GM10248 (cell line): ENCODE measurements at regions of chr5 and their contacts with region 1.

Region 1: GRCh38 chr5:136212252-136212721 is 19.3 kb upstream of the SMIM32 start:
- DNase-seq: peak; percentile 82
- CTCF ChIP-seq: peak; percentile 86

Region 2: DNA sequence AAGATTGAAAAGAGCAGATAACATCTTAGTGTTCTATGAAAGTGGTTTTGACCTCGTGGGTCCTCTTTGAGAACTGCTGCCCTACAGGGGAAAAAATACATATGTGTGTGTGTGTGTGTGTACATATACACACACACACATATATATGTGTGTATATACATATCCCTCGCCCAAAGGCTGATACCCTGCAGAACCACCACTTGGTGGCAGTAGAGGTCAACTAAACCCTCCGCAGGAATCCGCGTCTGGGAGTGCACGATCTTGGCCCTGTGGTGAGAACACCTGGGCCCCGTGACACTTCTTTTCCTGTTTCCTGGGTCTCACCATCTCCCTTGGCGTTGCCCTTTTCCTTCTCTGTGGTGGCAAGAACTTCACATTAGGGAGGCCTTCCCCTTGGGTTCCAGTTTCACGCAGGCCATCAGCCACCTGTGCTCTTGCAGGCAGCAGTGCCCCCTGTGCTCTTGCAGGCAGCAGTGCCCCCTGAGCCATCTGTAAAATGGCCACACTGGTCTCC is 324.9 kb before region 1 on chr5:
- CTCF ChIA-PET with region 1: interaction called, 50 read pairs
- POLR2A ChIA-PET with region 1: no interaction called
- DNase-seq: peak; percentile 72
- CTCF ChIP-seq: peak; percentile 78

Region 3: DNA sequence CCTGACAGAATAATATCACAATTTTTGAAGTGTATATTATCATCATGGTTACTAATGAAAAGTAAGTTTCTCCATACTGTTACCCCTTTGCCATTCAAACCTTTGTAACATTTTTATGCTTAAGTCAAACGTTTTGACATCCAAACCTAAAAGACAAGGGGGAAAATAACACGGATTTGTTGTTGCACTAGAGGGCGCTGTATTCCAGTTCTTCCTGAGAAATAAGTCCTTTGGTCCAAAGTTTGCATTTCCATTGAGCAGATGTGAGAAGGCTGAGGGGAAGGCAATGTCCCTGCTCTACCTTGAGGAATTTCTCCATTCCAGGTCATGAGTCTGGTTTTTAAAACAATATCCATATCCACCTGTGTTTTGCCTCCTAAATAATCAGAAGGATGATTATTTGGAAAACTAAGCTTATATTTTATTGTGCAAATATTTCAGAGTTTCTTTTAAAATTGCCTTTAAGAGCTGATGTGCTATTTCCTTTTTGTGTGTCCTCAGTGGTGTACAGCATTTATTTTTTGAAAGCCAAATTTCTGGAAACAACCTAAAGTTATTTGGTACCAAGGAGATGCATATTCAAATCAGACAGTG is 267.2 kb before region 1 on chr5:
- CTCF ChIA-PET with region 1: interaction called, 14 read pairs
- POLR2A ChIA-PET with region 1: no interaction called
- DNase-seq: peak; percentile 36
- CTCF ChIP-seq: peak; percentile 66

Region 4: GRCh38 chr5:136225796-136226195 is 13.5 kb after region 1 on chr5:
- CTCF ChIA-PET with region 1: interaction called, 19 read pairs
- POLR2A ChIA-PET with region 1: no interaction called
- DNase-seq: no peak
- CTCF ChIP-seq: no peak